ENCODE measurements at regions of chr2 and their contacts with region 1.

Region 1: DNA sequence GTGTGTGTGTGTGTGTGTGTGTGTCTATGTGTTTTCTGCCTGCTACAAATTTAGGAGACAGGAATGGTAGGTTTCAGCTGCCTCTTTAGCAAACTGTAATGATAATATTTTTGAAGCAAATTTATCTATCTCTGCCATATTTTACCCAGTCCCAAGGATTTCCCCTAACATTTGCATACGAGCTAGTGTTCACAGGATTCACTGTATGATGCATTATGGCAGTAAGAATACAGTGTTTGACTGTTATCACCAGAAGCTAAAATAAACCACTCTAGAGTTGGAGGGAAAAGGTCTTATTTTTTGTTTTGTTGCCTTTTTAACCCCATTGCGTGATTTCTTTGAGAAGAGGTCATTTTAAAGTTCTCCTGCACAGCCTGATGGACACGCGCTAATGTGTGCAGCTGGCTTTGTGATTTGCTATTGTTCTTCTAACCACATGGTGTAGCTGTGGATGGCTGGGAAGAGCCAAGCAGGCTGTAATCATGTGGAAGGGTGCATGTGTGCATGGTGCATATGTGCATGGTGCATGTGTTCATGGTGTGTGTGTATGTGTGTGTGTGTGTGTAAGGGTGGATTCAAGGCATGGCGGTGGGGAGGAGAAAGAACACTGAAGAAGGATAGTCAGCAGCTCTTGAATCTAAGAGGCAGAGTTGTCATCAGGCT is 62.4 kb downstream of the PLB1 start:
- DNase-seq: no peak
- H3K4me3 ChIP-seq: no peak overlapping the region
- H3K27ac ChIP-seq: no peak overlapping the region
- H3K4me1 ChIP-seq: no peaks in the 10 kb centered on the region
- H3K27me3 ChIP-seq: no peaks in the 10 kb centered on the region
- CTCF ChIP-seq: no peak

Region 2: GRCh38 chr2:28445448-28446258 is 112.6 kb before region 1 on chr2:
- CTCF ChIA-PET with region 1: no interaction called
- POLR2A ChIA-PET with region 1: interaction called, 15 read pairs
- intact Hi-C with region 1: no loop called
- DNase-seq: peak; percentile 68 to 88
- H3K4me3 ChIP-seq: no peak overlapping the region
- H3K27ac ChIP-seq: 0 out of 2 replicates have a peak overlapping the region, but pooled peaks have one; percentile 16
- H3K4me1 ChIP-seq: peaks cover 65% of the 10 kb centered on the region
- H3K27me3 ChIP-seq: no peaks in the 10 kb centered on the region
- CTCF ChIP-seq: no peak

Measured in PC-9 (cell line).